Panc1 (cell line): ENCODE measurements at regions of chr4 and their contacts with region 1.

Region 1: GRCh38 chr4:13548984-13549546 is 4.8 kb upstream of the NKX3-2 start:
- DNase-seq: peak; percentile 48
- ATAC-seq: peak; percentile 61; the same call in 1 of the 2 replicates
- H3K4me3 ChIP-seq: peak overlapping the region; percentile 26 to 33
- H3K27ac ChIP-seq: no peak overlapping the region
- H3K4me1 ChIP-seq: no peaks in the 10 kb centered on the region
- H3K27me3 ChIP-seq: 0 out of 2 replicates have a peak, but pooled peaks cover 2% of the 10 kb centered on the region
- CTCF ChIP-seq: peak; percentile 82

Region 2: GRCh38 chr4:12729384-12729783 is 819.7 kb before region 1 on chr4:
- CTCF ChIA-PET with region 1: no interaction called
- POLR2A ChIA-PET with region 1: no interaction called
- in situ Hi-C with region 1: no loop called
- intact Hi-C with region 1: loop called (anchors 2 kb)
- DNase-seq: no peak
- ATAC-seq: no peak
- H3K4me3 ChIP-seq: no peak overlapping the region
- H3K27ac ChIP-seq: no peak overlapping the region
- H3K4me1 ChIP-seq: no peaks in the 10 kb centered on the region
- H3K27me3 ChIP-seq: no peaks in the 10 kb centered on the region
- CTCF ChIP-seq: peak; percentile 35

Region 3: DNA sequence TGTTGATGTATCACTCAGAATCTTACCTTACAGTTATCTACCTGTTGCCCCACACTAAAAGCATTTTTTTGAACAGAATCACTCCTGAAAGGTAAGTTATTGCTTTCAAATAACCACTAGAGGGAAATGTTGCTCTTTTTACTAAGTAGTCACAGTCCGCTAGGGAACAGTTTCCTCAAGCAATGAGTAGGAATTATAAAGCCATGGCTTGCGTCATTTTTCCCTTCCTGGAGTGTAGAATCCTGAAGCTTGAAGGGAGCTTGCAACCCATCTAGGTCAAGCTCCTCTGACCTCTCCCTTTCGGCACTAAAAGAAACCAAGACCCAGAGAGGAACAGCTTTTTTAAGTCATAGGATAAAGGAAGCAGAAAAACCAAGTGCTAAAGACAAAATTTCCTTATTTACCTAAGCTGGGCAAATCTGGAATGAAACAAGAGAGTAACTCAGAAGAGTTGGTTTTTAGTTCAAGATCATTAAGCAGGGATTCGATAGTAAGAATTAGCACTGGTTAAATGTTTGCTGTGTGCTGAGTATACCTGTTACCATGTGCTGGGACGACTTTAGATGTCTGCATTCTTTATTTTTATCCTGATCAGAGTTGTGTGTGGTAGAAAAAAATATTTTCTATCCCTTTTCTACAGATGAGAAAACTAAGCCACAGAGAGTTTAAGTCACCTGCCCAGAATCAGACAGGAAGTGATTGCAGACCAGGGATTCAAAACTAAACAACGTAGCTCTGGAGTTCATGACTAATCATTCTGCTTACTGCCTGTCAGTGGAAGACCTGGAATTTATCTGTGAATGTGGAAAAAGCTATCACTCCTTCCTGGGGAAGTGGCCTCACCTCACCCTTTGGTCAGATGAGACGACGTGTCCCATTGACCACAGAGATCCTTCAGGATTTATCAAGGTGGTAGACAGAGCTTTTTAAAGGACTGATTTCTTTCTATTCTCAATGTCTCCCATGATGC is 696.4 kb before region 1 on chr4:
- CTCF ChIA-PET with region 1: interaction called, 4 read pairs
- POLR2A ChIA-PET with region 1: no interaction called
- in situ Hi-C with region 1: no loop called
- intact Hi-C with region 1: loop called (anchors 2 kb)
- DNase-seq: peak; percentile 46
- ATAC-seq: peak; percentile 80
- H3K4me3 ChIP-seq: no peak overlapping the region
- H3K27ac ChIP-seq: no peak overlapping the region
- H3K4me1 ChIP-seq: no peaks in the 10 kb centered on the region
- H3K27me3 ChIP-seq: no peaks in the 10 kb centered on the region
- CTCF ChIP-seq: peak; percentile 59

Region 4: DNA sequence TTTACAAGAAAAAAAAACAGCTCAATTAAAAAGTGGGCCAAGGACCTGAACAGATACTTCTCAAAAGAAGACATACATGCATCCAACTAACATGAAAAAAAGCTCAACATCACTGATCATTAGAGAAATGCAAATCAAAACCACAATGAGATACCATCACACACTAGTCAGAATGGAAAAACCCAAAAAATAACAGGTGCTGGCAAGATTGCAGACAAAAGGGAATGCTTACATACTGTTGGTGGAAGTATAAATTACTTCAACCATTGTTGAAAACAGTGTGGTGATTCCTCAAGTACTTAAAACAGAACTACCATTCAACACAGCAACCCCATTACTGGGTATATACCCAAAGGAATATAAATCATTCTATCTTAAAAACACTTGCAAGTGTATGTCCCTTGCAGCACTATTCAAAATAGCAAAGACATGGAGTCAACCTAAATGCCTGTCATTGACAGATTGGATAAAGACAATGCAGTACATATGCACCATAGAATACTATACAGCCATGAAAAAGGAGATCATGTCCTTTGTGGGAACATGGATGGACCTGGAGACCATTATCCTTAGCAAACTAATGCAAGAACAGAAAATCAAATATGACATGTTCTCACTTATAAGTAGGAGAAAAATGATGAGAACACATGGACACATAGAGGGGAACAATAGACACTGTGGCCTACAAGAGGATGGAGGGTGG is 162.5 kb before region 1 on chr4:
- CTCF ChIA-PET with region 1: no interaction called
- POLR2A ChIA-PET with region 1: no interaction called
- in situ Hi-C with region 1: no loop called
- intact Hi-C with region 1: loop called (anchors 10 kb)
- DNase-seq: no peak
- ATAC-seq: no peak
- H3K4me3 ChIP-seq: no peak overlapping the region
- H3K27ac ChIP-seq: no peak overlapping the region
- H3K4me1 ChIP-seq: no peaks in the 10 kb centered on the region
- H3K27me3 ChIP-seq: no peaks in the 10 kb centered on the region
- CTCF ChIP-seq: no peak